Calu3 (cell line): ENCODE measurements at regions of chr2 and their contacts with region 1.

Region 1: GRCh38 chr2:56183643-56184499 is at the start of gene CCDC85A:
- DNase-seq: peak; percentile 92
- H3K4me3 Mint-ChIP-seq: peak within 1 kb of the TSS; percentile 89
- H3K27ac Mint-ChIP-seq: no peak within 1 kb of the TSS
- H3K4me1 Mint-ChIP-seq: peaks cover 19% of the 10 kb centered on the region
- H3K27me3 Mint-ChIP-seq: no peaks in the 10 kb centered on the region
- CTCF ChIP-seq: peak; percentile 91
- total RNA-seq, gene CCDC85A: 2.6 and 3.0 TPM in 2 replicates

Region 2: DNA sequence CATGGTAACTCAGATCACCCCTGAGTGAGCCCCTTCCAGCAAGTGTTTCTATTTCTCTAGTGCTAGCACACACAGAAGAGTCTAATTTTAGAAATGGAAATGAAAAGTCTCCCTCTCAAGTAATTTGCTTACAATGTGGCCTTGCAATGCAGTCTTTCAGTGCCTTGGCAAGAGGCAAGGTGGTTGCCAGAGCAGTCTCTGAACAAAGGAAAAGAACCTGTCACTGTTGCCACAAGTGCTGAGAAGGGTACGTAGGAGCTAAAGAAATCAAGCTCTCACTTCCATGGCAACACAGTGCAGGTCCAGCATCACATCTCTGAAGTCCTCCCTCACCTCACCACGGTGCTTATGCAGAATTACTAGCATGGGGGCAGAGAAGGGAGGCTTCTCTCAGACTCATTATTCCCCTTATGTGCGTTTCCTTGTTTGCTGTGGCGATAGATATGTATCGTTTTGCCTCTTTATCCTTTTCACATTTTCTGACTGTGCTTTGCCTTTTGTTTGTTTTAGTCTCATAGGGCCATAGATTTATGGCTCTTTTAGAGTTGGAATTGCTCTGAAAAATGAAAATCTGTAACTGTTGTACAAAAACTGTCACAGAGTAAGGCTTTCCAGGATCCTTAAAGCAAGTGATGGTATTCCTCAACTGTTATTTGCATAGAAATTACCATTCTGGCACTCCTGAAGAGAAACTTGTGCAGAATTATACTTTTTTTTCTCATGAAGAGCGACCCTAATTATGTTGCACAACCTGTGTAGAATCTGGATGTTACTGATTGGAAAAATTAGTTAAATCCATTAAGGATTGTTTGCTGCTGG is 164.7 kb after region 1 on chr2:
- CTCF ChIA-PET with region 1: no interaction called
- intact Hi-C with region 1: no loop called
- DNase-seq: no peak
- H3K4me3 Mint-ChIP-seq: no peak overlapping the region
- H3K27ac Mint-ChIP-seq: no peak overlapping the region
- H3K4me1 Mint-ChIP-seq: no peaks in the 10 kb centered on the region
- H3K27me3 Mint-ChIP-seq: no peaks in the 10 kb centered on the region
- CTCF ChIP-seq: no peak

Region 3: DNA sequence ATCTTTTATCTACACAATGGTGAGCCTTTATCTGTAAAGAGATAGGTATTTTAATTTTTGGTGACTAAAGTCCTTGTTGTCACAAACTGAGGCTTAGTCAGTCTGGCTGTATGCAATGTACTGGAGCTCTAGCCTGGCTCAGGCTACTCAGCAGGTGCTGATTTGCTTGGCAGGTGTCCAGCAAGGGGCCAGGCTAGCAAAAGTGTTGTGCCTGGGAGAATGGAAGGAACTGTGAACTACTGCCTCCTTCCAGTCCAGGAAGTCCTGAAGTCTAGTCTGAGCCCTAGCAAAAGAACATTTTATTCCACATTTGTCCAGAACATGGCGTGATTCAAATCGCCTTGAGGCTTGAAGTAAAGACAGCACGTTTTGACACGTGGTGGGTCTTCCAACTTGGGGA is 260.5 kb after region 1 on chr2:
- CTCF ChIA-PET with region 1: interaction called, 3 read pairs
- intact Hi-C with region 1: loop called (anchors 5 kb)
- DNase-seq: peak; percentile 83
- H3K4me3 Mint-ChIP-seq: no peak overlapping the region
- H3K27ac Mint-ChIP-seq: peak overlapping the region; percentile 92
- H3K4me1 Mint-ChIP-seq: peaks cover 42% of the 10 kb centered on the region
- H3K27me3 Mint-ChIP-seq: no peaks in the 10 kb centered on the region
- CTCF ChIP-seq: no peak

Region 4: GRCh38 chr2:56981554-56981953 is 797.7 kb after region 1 on chr2:
- CTCF ChIA-PET with region 1: no interaction called
- intact Hi-C with region 1: loop called (anchors 10 kb)
- DNase-seq: no peak
- H3K4me3 Mint-ChIP-seq: no peak overlapping the region
- H3K27ac Mint-ChIP-seq: no peak overlapping the region
- H3K4me1 Mint-ChIP-seq: no peaks in the 10 kb centered on the region
- H3K27me3 Mint-ChIP-seq: no peaks in the 10 kb centered on the region
- CTCF ChIP-seq: no peak

Region 5: GRCh38 chr2:57376985-57377384 is 1193.1 kb after region 1 on chr2:
- CTCF ChIA-PET with region 1: no interaction called
- intact Hi-C with region 1: loop called (anchors 10 kb)
- DNase-seq: no peak
- H3K4me3 Mint-ChIP-seq: no peak overlapping the region
- H3K27ac Mint-ChIP-seq: no peak overlapping the region
- H3K4me1 Mint-ChIP-seq: peaks cover 28% of the 10 kb centered on the region
- H3K27me3 Mint-ChIP-seq: no peaks in the 10 kb centered on the region
- CTCF ChIP-seq: no peak

Region 6: GRCh38 chr2:57510704-57511103 is 1326.8 kb after region 1 on chr2:
- CTCF ChIA-PET with region 1: interaction called, 6 read pairs
- intact Hi-C with region 1: loop called (anchors 5 kb)
- DNase-seq: no peak
- H3K4me3 Mint-ChIP-seq: no peak overlapping the region
- H3K27ac Mint-ChIP-seq: no peak overlapping the region
- H3K4me1 Mint-ChIP-seq: peaks cover 3% of the 10 kb centered on the region
- H3K27me3 Mint-ChIP-seq: no peaks in the 10 kb centered on the region
- CTCF ChIP-seq: no peak